Left cardiac atrium (tissue), 4 donors: ENCODE measurements at regions of chr6 and their contacts with region 1.

Region 1: DNA sequence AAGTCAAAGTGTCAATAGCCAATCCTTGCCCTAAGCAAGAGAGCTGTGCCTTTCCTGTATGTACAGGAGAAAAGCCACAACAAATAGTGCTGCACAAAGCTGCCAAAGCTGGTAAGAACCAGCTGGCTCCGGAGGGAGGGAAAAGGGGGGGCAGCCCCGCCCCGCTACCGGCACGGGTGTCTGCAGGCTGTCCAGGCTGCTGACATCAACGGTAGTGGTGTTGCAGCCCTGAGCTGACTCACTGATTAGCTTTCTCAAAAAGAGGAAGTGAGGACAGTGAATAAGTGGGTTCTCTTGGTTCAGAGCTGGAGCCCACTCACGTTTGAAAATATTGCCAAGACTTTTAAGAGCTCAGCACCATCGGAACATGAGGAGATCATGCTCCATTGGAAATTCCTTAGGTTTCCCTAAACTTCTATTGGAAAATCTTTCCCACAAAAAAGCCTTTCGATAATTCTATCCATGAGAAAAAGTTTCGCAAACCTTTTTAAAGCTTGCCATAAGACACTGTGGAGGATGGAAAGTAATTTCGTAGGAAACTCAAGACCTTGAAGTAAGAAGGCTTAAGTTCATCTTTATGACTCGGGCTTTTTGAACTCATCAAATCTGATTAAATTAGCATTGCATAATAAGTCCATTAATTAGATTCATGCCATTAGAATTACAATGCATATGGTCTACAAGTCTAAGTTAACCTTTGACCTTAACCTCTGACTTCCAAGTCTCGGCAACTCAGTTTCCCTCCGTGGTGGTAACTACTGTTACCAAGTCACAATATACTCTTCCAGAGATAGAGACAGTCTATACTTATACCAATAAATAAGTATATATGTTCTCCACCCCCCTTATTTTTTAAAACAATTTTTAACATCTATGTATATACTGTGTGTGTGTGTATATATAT is 67.0 kb downstream of the TNFRSF21 start:
- DNase-seq: peak; percentile 88
- ATAC-seq: peak; percentile 98

Region 2: DNA sequence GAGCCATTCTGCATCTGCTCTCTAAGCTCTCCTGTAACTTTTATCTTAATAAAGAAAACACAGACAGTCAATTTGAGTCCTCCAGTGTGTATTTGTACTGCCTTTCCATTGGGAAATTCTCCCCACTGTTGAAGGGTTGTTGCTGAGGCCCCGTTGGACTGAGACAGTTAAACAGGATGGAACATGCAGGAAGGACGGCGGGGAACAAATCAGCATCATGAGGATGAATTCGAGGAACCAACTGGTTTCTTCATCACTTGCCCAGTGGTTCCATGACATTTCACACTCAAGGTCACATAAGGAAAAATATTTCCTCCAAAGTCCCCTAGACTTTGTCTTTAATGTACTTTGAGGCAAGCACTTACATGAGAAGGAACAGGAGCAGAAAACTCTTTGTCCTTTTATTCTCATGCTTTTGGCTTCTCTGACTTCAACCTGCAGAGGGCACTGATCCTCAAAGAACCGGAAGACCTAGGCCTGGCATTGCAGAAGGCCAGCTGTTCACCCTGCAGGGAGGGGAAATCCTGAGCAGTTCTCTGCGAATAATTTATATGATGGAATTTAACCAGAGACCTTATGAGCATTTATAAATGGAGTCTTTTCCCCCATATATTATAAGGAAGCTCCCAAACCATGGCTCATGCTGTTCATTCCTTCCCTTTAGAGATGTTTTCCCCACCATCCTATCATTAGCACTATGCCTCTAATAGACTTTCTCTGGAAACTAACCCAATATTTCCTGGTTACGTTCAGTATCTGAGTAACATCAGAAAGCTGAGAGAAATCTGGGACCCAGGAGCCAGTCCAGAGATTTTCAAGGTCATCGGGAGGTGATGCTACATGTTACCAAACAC is 145.4 kb before region 1 on chr6:
- intact Hi-C with region 1: loop called (anchors 2 to 5 kb)
- DNase-seq: peak; percentile 53
- ATAC-seq: peak; percentile 85 to 90

Region 3: GRCh38 chr6:47126647-47127391 is 115.9 kb before region 1 on chr6:
- intact Hi-C with region 1: loop called in 1 of 2 experiments (anchors 10 kb)
- DNase-seq: no peak
- ATAC-seq: peak; percentile 53 to 56

Region 4: DNA sequence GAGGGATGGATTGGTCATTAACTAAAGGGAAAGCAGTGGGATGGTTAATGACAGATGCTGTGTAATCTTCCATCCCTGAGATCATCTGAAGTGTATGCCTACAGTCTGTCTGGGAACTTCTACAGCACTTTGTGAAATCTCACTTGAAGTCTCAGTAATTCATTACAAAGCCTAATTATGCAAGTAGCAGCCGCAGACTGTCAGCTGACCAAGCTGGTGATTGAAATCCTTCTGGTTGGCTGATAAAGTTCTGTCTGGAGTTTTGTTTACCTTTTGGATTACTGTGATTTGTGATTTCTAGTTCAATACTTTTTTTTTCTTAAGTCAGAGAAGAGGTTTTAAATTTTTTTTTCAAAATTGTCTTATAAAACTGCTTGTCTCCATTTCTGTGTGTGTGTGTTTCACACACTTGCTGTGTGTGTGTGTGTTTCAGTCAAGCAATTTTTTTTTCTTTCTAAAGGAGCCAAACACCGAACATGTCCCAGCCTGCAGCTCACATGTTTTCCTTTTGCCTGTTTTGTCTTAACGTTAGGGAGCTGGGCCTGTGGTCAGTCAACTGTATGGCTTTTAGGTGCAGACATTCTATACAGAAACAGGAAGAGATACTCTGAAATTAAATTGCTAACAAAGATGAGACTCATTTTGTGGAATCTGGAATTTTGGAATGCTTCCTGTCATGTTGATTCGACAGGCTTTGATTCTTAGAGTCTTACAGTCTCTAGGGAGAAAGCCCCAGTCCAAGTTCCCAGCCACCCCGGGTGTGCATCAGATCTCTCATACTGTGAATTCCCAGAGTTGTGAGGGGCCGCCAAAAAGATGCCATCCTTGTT is 427.2 kb after region 1 on chr6:
- intact Hi-C with region 1: no loop called
- DNase-seq: no peak
- ATAC-seq: peak in 1 of 2 donors; percentile 59